Common myeloid progenitor, CD34-positive (primary cell): ENCODE measurements at regions of chr15 and their contacts with region 1.

Region 1: DNA sequence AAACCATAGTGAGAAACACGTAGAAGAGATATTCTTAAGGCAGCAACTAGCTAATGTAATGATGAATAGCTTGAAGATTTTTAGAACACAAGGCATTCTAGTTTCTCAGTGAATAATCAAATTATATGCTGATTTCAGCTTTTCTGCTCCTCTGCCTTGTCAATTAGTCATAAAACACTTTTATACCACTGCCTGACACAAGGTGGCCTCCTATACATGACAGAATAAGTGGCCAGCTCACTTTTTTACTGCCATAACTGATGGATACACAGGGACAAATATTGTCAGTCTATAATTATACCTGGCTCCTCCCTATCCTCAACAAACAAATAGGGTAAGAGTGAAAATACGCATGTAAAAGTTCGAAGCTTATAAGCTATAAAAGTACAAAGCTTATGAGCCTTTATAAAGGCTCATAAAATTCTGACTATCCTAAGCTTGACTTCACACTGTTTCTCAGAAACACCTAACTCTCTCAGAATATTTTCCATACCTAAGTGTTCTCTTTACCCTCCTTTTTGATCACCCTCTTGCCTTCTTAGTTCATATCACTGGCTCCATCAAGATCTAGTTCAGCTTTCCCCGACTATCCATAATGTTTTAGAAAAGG is 81.6 kb downstream of the HERC1 start:
- DNase-seq: peak; percentile 41 to 81 (median 76)
- H3K4me3 ChIP-seq: no peak overlapping the region
- H3K27ac ChIP-seq: no peak overlapping the region
- H3K4me1 ChIP-seq: no peaks in the 10 kb centered on the region
- H3K27me3 ChIP-seq: no peaks in the 10 kb centered on the region

Region 2: GRCh38 chr15:63623232-63623969 is 128.8 kb before region 1 on chr15:
- CTCF ChIA-PET with region 1: no interaction called
- POLR2A ChIA-PET with region 1: no interaction called
- DNase-seq: no peak
- H3K4me3 ChIP-seq: no peak overlapping the region
- H3K27ac ChIP-seq: no peak overlapping the region
- H3K4me1 ChIP-seq: no peaks in the 10 kb centered on the region
- H3K27me3 ChIP-seq: no peaks in the 10 kb centered on the region

Region 3: GRCh38 chr15:63763476-63764123 is 11.4 kb after region 1 on chr15:
- CTCF ChIA-PET with region 1: interaction called, 35 read pairs
- POLR2A ChIA-PET with region 1: no interaction called
- DNase-seq: peak; percentile 29 to 90 (median 86)
- H3K4me3 ChIP-seq: no peak overlapping the region
- H3K27ac ChIP-seq: peak overlapping the region in 1 of 2 experiments; percentile 62
- H3K4me1 ChIP-seq: peaks cover 15 to 38% (median 30%) of the 10 kb centered on the region in 4 experiments
- H3K27me3 ChIP-seq: no peaks in the 10 kb centered on the region

Region 4: DNA sequence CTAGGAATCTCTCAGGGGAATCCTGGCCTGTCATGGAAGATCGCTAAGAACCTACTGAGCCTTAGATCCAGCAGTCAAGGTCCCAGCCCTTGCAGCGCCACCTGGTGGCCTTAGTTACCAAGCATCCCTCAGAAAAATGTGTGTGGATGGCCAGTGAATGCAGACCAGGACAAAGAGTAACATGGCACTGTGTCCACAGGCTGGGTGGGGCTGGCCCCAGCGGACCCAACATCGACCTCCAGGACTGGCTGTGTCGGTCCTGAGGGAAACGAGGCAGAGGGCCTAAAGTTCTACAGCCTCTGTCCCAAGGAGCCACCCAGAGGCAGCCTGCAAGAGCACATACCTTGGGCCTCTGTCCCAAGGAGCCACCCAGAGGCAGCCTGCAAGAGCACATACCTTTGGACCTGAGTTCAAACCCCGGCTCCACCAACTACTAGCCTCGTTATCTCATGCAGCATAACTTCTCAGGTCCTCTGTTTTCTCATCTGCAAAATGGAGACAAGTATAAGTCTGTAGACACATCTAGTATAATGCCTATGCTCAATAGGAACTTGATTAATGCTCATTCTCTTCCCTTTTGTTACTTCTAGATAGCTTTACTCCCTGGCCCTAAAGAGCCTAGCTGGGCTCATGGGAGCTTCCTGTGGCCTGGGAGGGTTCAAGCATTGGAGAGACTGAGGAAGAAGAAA is 139.0 kb after region 1 on chr15:
- CTCF ChIA-PET with region 1: interaction called, 19 read pairs
- POLR2A ChIA-PET with region 1: no interaction called
- DNase-seq: peak; percentile 70 to 79 (median 74)
- H3K4me3 ChIP-seq: peak overlapping the region in 1 of 7 experiments; percentile 19
- H3K27ac ChIP-seq: no peak overlapping the region
- H3K4me1 ChIP-seq: peaks cover 26 to 65% (median 61%) of the 10 kb centered on the region in 4 experiments
- H3K27me3 ChIP-seq: no peaks in the 10 kb centered on the region

Region 5: GRCh38 chr15:64046347-64047153 is 294.4 kb after region 1 on chr15 and contains the start of gene DAPK2:
- CTCF ChIA-PET with region 1: interaction called, 13 read pairs
- POLR2A ChIA-PET with region 1: no interaction called
- DNase-seq: peak; percentile 41 to 62 (median 55)
- H3K4me3 ChIP-seq: peak within 1 kb of the TSS; percentile 28 to 78 (median 62)
- H3K27ac ChIP-seq: no peak within 1 kb of the TSS
- H3K4me1 ChIP-seq: peaks cover 10 to 46% (median 27%) of the 10 kb centered on the region in 4 experiments
- H3K27me3 ChIP-seq: peaks cover 0 to 7% (median 6%) of the 10 kb centered on the region in 5 experiments